ENCODE measurements at regions of chr1 and their contacts with region 1.

Region 1: DNA sequence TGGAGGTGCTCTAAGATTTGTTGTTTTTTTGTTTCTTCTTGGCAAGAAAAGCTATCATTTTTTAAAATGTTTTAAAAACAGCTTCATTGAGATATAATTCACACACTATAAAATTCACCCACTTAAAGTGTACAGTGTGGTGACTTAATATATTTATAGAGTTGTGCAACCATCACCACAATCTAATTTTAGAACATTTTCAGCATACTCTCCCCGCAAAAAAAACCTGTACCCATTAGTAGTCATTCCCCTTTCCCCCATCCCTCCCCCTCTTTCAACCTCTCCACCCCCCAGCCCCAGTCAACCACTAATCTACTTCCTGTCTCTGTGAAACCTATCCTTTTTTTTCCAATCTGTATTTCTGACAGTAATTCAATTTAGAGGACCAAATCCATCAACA is 30.6 kb downstream of the ZC3H11B start:
- DNase-seq: peak; percentile 46
- H3K4me3 ChIP-seq: no peak overlapping the region
- CTCF ChIP-seq: no peak

Region 2: GRCh38 chr1:219529116-219529515 is 53.2 kb before region 1 on chr1:
- in situ Hi-C with region 1: loop called (anchors 10 kb)
- DNase-seq: no peak
- H3K4me3 ChIP-seq: no peak overlapping the region
- CTCF ChIP-seq: no peak

Measured in astrocyte of the cerebellum (primary cell).